ENCODE measurements at regions of chr11 and their contacts with region 1.

Region 1: GRCh38 chr11:117466966-117467365 is 139.3 kb downstream of the CEP164 start:
- DNase-seq: no peak
- ATAC-seq: no peak
- H3K4me3 ChIP-seq: no peak overlapping the region
- H3K27ac ChIP-seq: no peak overlapping the region
- H3K4me1 ChIP-seq: no peaks in the 10 kb centered on the region
- H3K27me3 ChIP-seq: no peaks in the 10 kb centered on the region
- CTCF ChIP-seq: no peak

Region 2: DNA sequence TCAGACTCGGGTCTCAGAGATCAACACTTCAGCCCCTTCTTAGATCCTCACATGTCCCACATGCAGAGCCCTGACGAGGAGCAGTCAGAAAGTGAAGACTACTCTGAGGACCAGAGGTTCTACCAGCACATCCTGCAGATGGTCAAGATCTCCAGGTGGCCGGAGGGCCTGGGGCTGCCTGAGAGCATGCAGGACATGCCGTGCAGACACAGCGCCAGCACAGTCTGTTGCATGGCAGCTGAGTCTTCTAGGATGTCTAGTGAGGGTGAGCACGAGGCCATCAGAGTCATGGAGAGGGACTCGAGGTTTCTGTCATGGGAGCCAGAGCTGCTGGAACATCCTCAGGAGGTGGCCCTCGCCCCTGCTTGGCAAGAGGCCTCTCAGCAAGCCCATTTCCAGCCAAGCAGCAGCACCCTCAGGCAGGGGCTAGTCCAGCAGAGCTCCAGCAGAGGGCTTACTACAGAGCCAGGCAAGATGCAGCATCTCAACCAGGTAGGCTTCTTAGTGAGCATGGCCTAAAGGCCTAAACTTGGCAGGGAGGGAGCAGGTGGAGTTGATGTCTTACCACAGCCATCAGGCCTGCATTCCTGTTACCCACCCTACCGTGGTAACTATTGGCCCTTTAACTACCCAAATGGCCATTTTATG is 110.7 kb before region 1 on chr11:
- intact Hi-C with region 1: no loop called
- DNase-seq: no peak
- ATAC-seq: peak in 1 of 8 donors; percentile 41
- H3K4me3 ChIP-seq: no peak overlapping the region
- H3K27ac ChIP-seq: no peak overlapping the region
- H3K4me1 ChIP-seq: no peaks in the 10 kb centered on the region
- H3K27me3 ChIP-seq: no peaks in the 10 kb centered on the region
- CTCF ChIP-seq: no peak

Region 3: DNA sequence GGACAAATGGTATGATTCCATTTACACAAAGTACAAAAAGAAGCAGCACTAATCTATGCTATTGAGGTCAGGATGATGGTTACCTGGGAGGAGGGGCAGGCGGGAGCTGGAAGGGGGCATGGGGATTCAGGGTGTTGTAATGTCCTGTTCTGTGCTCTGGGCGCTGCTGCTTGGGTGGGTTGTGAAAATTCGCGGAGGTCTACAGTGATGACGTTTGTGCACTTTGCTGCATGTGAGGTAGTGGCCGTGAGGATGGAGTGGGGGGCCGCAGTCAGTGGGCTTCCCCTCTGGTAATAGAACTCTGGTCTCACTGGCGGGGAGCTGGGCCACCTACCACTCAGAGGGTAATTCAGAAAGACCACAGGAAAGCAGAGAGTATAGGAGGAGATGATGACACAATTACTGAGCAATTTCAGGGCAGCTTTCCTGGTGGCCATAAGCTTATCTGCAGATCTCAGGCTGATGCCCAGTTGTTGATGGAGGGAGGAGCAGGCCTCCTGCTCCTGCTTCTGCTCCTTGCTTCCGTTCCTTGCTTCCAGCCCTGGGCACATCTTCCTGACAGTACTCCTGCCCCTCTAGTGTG is 17.8 kb before region 1 on chr11:
- intact Hi-C with region 1: loop called in 1 of 10 experiments (anchors 2 kb)
- DNase-seq: no peak
- ATAC-seq: no peak
- H3K4me3 ChIP-seq: no peak overlapping the region
- H3K27ac ChIP-seq: no peak overlapping the region
- H3K4me1 ChIP-seq: peaks cover 0 to 5% (median 0%) of the 10 kb centered on the region in 9 donors
- H3K27me3 ChIP-seq: peaks cover 0 to 8% (median 3%) of the 10 kb centered on the region in 7 donors
- CTCF ChIP-seq: no peak

Region 4: GRCh38 chr11:117479372-117479771 is 12.4 kb after region 1 on chr11:
- intact Hi-C with region 1: no loop called
- DNase-seq: no peak
- ATAC-seq: no peak
- H3K4me3 ChIP-seq: no peak overlapping the region
- H3K27ac ChIP-seq: no peak overlapping the region
- H3K4me1 ChIP-seq: no peaks in the 10 kb centered on the region
- H3K27me3 ChIP-seq: peaks cover 0 to 3% (median 0%) of the 10 kb centered on the region in 7 donors
- CTCF ChIP-seq: peak in 1 of 9 donors; percentile 13

Region 5: GRCh38 chr11:117570701-117571100 is 103.7 kb after region 1 on chr11:
- intact Hi-C with region 1: no loop called
- DNase-seq: no peak
- ATAC-seq: no peak
- H3K4me3 ChIP-seq: no peak overlapping the region
- H3K27ac ChIP-seq: no peak overlapping the region
- H3K4me1 ChIP-seq: peaks cover 0 to 6% (median 0%) of the 10 kb centered on the region in 9 donors
- H3K27me3 ChIP-seq: peaks cover 0 to 3% (median 0%) of the 10 kb centered on the region in 7 donors
- CTCF ChIP-seq: no peak